Mammary epithelial cell (primary cell): ENCODE measurements at regions of chr11 and their contacts with region 1.

Region 1: DNA sequence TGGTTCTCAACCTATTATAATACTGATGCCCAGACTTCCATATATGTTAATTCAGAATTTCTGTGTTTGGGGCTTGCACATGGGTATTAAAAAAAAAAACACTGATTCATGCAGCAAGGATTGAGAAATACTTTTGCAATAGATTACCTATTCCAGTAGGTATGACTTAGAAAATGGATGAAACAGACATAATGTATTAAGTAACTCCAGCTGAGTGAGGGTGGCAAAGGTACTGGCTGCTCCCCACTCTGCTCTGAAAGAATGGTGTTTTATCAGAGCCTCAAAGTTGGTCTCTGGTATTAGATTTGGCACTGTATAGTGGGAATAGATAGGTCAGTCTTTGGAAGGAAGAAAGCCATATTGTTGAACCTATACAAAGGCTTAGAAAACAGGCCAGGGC is 234.3 kb upstream of the FOLH1 start:
- DNase-seq: no peak
- H3K4me3 ChIP-seq: no peak overlapping the region
- H3K27ac ChIP-seq: no peak overlapping the region
- H3K4me1 ChIP-seq: no peaks in the 10 kb centered on the region
- H3K27me3 ChIP-seq: no peaks in the 10 kb centered on the region
- CTCF ChIP-seq: no peak

Region 2: DNA sequence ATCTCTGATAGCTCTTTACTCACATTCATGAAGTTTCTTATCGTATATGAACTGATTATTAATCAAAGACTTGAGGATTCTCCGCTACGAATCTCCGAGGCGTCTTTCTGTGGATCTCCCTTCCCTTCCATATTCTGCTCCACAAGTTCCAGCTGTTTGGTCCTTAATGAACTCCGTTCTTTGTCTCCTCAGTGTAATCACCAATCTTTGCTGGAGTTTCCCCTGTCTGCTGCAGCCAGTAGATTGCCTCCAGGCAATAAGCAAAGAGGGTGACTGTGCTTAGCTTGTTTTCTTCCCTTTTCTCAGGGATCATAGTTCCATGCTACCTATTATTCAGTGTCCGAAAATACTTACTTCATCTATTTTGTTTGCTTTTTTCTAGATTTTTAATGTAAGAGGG is 64.7 kb before region 1 on chr11:
- CTCF ChIA-PET with region 1: no interaction called
- dilution Hi-C with region 1: no loop called
- in situ Hi-C with region 1: no loop called
- intact Hi-C with region 1: no loop called
- DNase-seq: no peak
- H3K4me3 ChIP-seq: no peak overlapping the region
- H3K27ac ChIP-seq: no peak overlapping the region
- H3K4me1 ChIP-seq: no peaks in the 10 kb centered on the region
- H3K27me3 ChIP-seq: no peaks in the 10 kb centered on the region
- CTCF ChIP-seq: no peak

Region 3: DNA sequence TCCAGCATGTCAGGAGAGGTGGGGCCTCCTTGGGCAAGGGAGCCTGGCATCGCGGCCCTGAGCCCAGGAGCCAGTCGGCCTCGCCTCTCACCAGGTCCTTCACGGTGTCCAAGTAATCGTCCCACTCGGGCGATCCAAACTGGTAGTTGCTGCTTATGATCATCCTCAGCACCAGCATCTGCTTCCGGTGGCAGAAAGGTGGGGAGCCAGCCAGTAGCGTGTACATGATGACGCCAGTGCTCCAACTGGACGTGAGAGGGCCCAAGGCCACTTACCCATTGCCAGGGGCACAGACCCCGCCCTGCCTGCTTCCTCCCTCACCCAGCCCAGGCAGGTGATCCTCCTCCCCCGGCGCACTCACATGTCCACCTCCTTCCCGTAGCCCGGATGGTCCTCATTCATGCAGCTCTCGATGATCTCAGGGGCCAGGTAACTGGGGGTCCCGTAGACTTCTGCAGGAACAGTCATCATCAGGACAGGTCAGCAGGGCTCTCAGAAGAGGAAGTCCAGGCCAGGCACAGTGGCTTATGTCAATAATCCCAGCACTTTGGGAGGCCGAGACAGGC is 804.7 kb after region 1 on chr11:
- CTCF ChIA-PET with region 1: no interaction called
- dilution Hi-C with region 1: no loop called
- in situ Hi-C with region 1: no loop called
- intact Hi-C with region 1: no loop called
- DNase-seq: no peak
- H3K4me3 ChIP-seq: no peak overlapping the region
- H3K27ac ChIP-seq: no peak overlapping the region
- H3K4me1 ChIP-seq: no peaks in the 10 kb centered on the region
- H3K27me3 ChIP-seq: no peaks in the 10 kb centered on the region
- CTCF ChIP-seq: no peak

Region 4: DNA sequence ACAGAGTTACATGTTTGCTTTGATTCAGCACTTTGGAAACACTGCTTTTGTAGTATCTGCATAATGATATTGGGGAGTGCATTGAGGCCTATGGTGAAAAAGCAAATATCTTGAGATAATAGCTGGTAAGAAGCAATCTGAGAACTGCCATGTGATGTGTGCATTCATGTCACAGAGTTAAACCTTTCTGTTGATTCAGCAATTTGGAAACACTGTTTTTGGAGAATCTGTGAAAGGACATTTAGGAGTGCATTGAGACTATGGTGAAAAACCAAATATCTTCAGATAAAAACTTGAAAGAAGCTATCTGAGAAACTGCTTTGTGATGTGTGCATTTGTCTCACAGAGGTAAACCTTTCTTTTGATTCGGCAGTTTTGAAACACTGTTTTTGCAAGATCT is 936.8 kb after region 1 on chr11:
- CTCF ChIA-PET with region 1: interaction called, 10 read pairs
- dilution Hi-C with region 1: no loop called
- in situ Hi-C with region 1: no loop called
- intact Hi-C with region 1: no loop called
- DNase-seq: no peak
- H3K4me3 ChIP-seq: no peak overlapping the region
- H3K27ac ChIP-seq: no peak overlapping the region
- H3K4me1 ChIP-seq: no peaks in the 10 kb centered on the region
- H3K27me3 ChIP-seq: no peaks in the 10 kb centered on the region
- CTCF ChIP-seq: no peak